ENCODE measurements at regions of chr11 and their contacts with region 1.

Region 1: DNA sequence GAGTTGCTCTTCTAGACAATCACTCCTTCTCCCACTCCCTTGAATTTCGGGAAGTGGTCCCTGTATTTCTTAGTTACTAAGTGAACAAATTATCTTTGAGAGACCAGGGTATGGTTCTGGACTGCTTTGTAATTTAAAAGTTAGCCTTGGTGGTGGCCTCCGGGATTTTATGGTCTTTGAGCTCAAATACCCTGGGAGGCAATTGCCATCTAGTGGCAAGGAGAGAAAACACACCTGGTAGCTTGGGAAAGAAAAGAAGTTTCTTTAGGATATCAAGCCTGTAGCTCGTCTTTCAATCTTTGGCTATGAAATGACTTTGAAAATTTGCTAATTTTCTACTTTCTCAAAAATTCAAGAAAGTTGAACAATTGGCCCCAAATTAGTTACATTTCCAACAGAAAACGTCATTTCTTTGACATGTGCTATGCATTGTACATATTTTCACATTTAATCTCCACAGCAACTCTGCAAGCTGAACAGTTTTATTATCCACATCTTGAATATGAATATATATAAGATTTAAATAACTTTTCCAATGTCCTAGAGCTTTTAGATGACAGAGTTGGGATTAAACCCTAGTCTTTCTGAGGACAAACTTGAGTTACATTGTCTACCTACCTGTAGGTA is 39.1 kb downstream of the MMP27 start:
- DNase-seq: peak; percentile 48 to 61 (median 54)
- ATAC-seq: peak; percentile 87
- H3K4me3 ChIP-seq: no peak overlapping the region
- H3K27ac ChIP-seq: no peak overlapping the region
- H3K4me1 ChIP-seq: no peaks in the 10 kb centered on the region
- H3K27me3 ChIP-seq: peaks cover 0 to 6% of the 10 kb centered on the region in 2 experiments; a peak in 1 of 5 replicates
- CTCF ChIP-seq: peak; percentile 71 to 88 (median 79)
- EP300 ChIP-seq: no peak
- POLR2A ChIP-seq: no peak
- RAD21 ChIP-seq: peak; percentile 80 to 81

Region 2: DNA sequence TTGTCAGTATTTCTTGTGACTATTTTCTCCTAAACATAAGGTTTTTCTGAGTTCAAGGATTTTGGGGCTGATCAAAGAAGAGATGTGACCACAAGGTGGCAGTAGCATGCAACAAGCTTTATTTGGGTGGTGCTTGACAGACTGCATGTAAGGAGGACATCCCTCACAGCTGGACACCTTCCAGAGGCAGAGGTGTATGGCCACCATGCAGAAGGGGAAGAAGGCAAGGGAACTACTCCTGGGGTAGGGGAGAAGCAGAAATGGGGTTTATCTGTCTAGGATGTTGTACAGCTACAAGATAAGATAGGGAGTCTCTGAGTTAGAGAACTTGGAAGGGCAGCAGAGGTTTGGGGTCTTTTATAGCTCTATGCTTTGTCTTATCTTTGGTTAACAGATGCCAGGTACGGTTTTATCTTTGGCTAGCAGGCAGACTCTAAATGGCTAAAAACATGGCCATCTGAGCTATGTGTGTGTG is 324.6 kb before region 1 on chr11:
- CTCF ChIA-PET with region 1: no interaction called
- POLR2A ChIA-PET with region 1: no interaction called
- in situ Hi-C with region 1: no loop called
- intact Hi-C with region 1: loop called (anchors 2 kb)
- DNase-seq: peak; percentile 80 to 96 (median 86)
- ATAC-seq: peak; percentile 89
- H3K4me3 ChIP-seq: no peak overlapping the region
- H3K27ac ChIP-seq: no peak overlapping the region; the same call in 2 of the 3 replicates
- H3K4me1 ChIP-seq: peaks cover 3 to 19% of the 10 kb centered on the region in 2 experiments; a peak in 4 of 5 replicates
- H3K27me3 ChIP-seq: no peaks in the 10 kb centered on the region; a peak in 1 of 5 replicates
- CTCF ChIP-seq: peak; percentile 78 to 89 (median 88)
- EP300 ChIP-seq: peak; percentile 93
- POLR2A ChIP-seq: no peak
- RAD21 ChIP-seq: peak; percentile 81 to 88

Region 3: DNA sequence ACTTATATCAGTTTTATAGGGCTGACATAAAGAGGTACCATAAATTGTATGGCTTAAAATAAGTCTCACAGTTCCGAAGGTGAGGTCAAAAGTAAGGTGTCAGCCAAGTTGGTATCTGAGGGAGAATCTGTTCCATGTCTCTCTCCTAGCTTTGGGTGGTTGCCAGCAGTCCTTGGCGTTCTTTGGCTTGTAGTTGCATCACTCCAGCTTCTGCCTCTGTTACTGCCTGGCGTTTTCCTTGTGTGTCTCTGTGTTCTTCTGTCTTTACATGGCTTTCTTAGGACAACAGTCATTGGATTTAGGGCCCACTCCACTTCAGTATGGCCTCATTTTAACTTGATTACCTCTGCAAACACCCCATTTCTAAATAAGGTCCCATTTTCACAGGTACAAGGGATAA is 152.6 kb before region 1 on chr11:
- CTCF ChIA-PET with region 1: no interaction called
- POLR2A ChIA-PET with region 1: no interaction called
- in situ Hi-C with region 1: no loop called
- intact Hi-C with region 1: loop called (anchors 5 kb)
- DNase-seq: peak in 1 of 4 experiments; percentile 6
- ATAC-seq: peak; percentile 53; the same call in 2 of the 3 replicates
- H3K4me3 ChIP-seq: no peak overlapping the region
- H3K27ac ChIP-seq: no peak overlapping the region
- H3K4me1 ChIP-seq: no peaks in the 10 kb centered on the region
- H3K27me3 ChIP-seq: no peaks in the 10 kb centered on the region; a peak in 1 of 5 replicates
- CTCF ChIP-seq: no peak
- EP300 ChIP-seq: no peak
- POLR2A ChIP-seq: no peak
- RAD21 ChIP-seq: no peak

Region 4: GRCh38 chr11:102592634-102593581 is 73.5 kb before region 1 on chr11:
- CTCF ChIA-PET with region 1: no interaction called
- POLR2A ChIA-PET with region 1: no interaction called
- in situ Hi-C with region 1: no loop called
- intact Hi-C with region 1: loop called (anchors 2 kb)
- DNase-seq: peak; percentile 11 to 27 (median 18)
- ATAC-seq: peak; percentile 81
- H3K4me3 ChIP-seq: no peak overlapping the region
- H3K27ac ChIP-seq: no peak overlapping the region
- H3K4me1 ChIP-seq: no peaks in the 10 kb centered on the region
- H3K27me3 ChIP-seq: no peaks in the 10 kb centered on the region
- CTCF ChIP-seq: peak; percentile 37 to 47 (median 45); a peak in 4 of 6 replicates
- EP300 ChIP-seq: no peak
- POLR2A ChIP-seq: no peak
- RAD21 ChIP-seq: peak in 1 of 2 experiments; percentile 41; a peak in 2 of 4 replicates

Region 5: DNA sequence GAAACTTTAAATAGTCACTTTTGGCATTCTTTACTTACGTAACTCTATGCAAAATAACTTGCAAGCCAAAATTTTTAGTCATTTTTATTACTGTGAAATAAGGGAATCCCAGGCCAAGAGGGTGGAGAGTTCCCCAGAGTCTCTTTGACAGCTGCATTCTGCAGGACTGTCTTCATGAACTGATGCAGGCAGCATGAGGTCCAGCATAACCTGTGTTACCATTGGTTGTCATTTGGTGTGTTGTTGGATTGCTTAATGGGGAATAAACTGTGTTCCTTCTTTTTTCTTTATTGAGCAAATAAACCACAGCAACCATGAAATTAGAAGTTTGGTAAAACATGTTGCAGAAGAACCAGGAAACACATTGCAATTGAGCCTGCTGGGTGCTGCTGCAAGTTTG is 14.5 kb after region 1 on chr11:
- CTCF ChIA-PET with region 1: no interaction called
- POLR2A ChIA-PET with region 1: no interaction called
- in situ Hi-C with region 1: no loop called
- intact Hi-C with region 1: no loop called
- DNase-seq: no peak
- ATAC-seq: no peak
- H3K4me3 ChIP-seq: no peak overlapping the region
- H3K27ac ChIP-seq: no peak overlapping the region
- H3K4me1 ChIP-seq: no peaks in the 10 kb centered on the region
- H3K27me3 ChIP-seq: no peaks in the 10 kb centered on the region
- CTCF ChIP-seq: no peak
- EP300 ChIP-seq: no peak
- POLR2A ChIP-seq: no peak
- RAD21 ChIP-seq: no peak